CD8-positive, alpha-beta T cell (primary cell): ENCODE measurements at regions of chr1 and their contacts with region 1.

Region 1: GRCh38 chr1:212455803-212456528 is 23.2 kb downstream of the NENF start:
- DNase-seq: peak; percentile 68 to 92 (median 81)
- ATAC-seq: peak; percentile 80
- H3K4me3 ChIP-seq: no peak overlapping the region
- H3K4me3 Mint-ChIP-seq: no peak overlapping the region
- H3K27ac ChIP-seq: no peak overlapping the region
- H3K27ac Mint-ChIP-seq: no peak overlapping the region
- H3K4me1 ChIP-seq: no peaks in the 10 kb centered on the region
- H3K4me1 Mint-ChIP-seq: peaks cover 2% of the 10 kb centered on the region
- H3K27me3 ChIP-seq: no peaks in the 10 kb centered on the region
- H3K27me3 Mint-ChIP-seq: no peaks in the 10 kb centered on the region
- CTCF ChIP-seq: peak; percentile 94

Region 2: GRCh38 chr1:211698161-211699026 is 757.6 kb before region 1 on chr1:
- CTCF ChIA-PET with region 1: interaction called, 23 read pairs
- POLR2A ChIA-PET with region 1: no interaction called
- intact Hi-C with region 1: no loop called
- DNase-seq: peak; percentile 70 to 90 (median 82)
- ATAC-seq: peak; percentile 96
- H3K4me3 ChIP-seq: peak overlapping the region; percentile 18 to 34
- H3K4me3 Mint-ChIP-seq: peak overlapping the region; percentile 76
- H3K27ac ChIP-seq: no peak overlapping the region
- H3K27ac Mint-ChIP-seq: no peak overlapping the region
- H3K4me1 ChIP-seq: peaks cover 30% of the 10 kb centered on the region
- H3K4me1 Mint-ChIP-seq: peaks cover 42% of the 10 kb centered on the region
- H3K27me3 ChIP-seq: no peaks in the 10 kb centered on the region
- H3K27me3 Mint-ChIP-seq: no peaks in the 10 kb centered on the region
- CTCF ChIP-seq: peak; percentile 99

Region 3: GRCh38 chr1:211781260-211781659 is 674.7 kb before region 1 on chr1:
- CTCF ChIA-PET with region 1: no interaction called
- POLR2A ChIA-PET with region 1: no interaction called
- intact Hi-C with region 1: no loop called
- DNase-seq: no peak
- ATAC-seq: no peak
- H3K4me3 ChIP-seq: no peak overlapping the region
- H3K4me3 Mint-ChIP-seq: no peak overlapping the region
- H3K27ac ChIP-seq: no peak overlapping the region
- H3K27ac Mint-ChIP-seq: no peak overlapping the region
- H3K4me1 ChIP-seq: no peaks in the 10 kb centered on the region
- H3K4me1 Mint-ChIP-seq: peaks cover 7% of the 10 kb centered on the region
- H3K27me3 ChIP-seq: no peaks in the 10 kb centered on the region
- H3K27me3 Mint-ChIP-seq: no peaks in the 10 kb centered on the region
- CTCF ChIP-seq: no peak

Region 4: DNA sequence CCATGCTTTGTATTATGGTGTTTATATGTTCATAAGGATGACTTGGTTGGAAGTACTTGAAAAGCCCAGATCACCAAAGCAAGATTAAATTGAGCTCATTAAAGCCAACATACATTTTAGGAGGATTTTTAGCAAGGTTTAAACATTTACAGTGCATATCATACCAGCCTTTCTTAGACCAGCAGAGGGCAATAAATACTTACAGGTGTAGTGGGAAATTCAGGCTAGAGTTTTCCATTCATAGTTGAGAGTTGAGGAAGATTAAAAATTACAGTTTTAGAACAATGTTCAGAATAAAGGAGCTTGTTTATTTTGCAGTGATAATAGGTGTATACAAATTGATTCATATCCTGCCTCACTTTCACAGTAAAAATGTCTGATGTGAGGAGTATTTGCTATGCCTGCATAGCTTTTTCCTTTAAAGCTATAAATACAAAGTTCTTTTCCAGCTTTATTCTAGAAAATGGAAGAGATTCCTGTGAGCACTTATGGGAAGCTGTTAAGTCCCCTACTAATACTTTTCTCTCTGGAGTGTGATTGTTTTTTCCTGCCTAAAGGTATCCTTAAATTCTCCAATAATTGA is 385.2 kb before region 1 on chr1:
- CTCF ChIA-PET with region 1: interaction called, 299 read pairs
- POLR2A ChIA-PET with region 1: interaction called, 14 read pairs
- intact Hi-C with region 1: loop called (anchors 1 to 2 kb)
- DNase-seq: peak in 2 of 9 experiments; percentile 60 to 72
- ATAC-seq: peak; percentile 68
- H3K4me3 ChIP-seq: no peak overlapping the region
- H3K4me3 Mint-ChIP-seq: no peak overlapping the region
- H3K27ac ChIP-seq: no peak overlapping the region
- H3K27ac Mint-ChIP-seq: no peak overlapping the region
- H3K4me1 ChIP-seq: no peaks in the 10 kb centered on the region
- H3K4me1 Mint-ChIP-seq: no peaks in the 10 kb centered on the region
- H3K27me3 ChIP-seq: no peaks in the 10 kb centered on the region
- H3K27me3 Mint-ChIP-seq: no peaks in the 10 kb centered on the region
- CTCF ChIP-seq: peak; percentile 71

Region 5: GRCh38 chr1:212368073-212368484 is 87.9 kb before region 1 on chr1:
- CTCF ChIA-PET with region 1: interaction called, 40 read pairs
- POLR2A ChIA-PET with region 1: no interaction called
- intact Hi-C with region 1: loop called (anchors 1 to 5 kb)
- DNase-seq: peak; percentile 16 to 78 (median 53)
- ATAC-seq: peak; percentile 92
- H3K4me3 ChIP-seq: no peak overlapping the region
- H3K4me3 Mint-ChIP-seq: no peak overlapping the region
- H3K27ac ChIP-seq: no peak overlapping the region
- H3K27ac Mint-ChIP-seq: peak overlapping the region; percentile 20
- H3K4me1 ChIP-seq: no peaks in the 10 kb centered on the region
- H3K4me1 Mint-ChIP-seq: no peaks in the 10 kb centered on the region
- H3K27me3 ChIP-seq: no peaks in the 10 kb centered on the region
- H3K27me3 Mint-ChIP-seq: no peaks in the 10 kb centered on the region
- CTCF ChIP-seq: peak; percentile 79

Region 6: GRCh38 chr1:212440419-212440818 is 15.5 kb before region 1 on chr1:
- CTCF ChIA-PET with region 1: interaction called, 23 read pairs
- POLR2A ChIA-PET with region 1: no interaction called
- intact Hi-C with region 1: no loop called
- DNase-seq: no peak
- ATAC-seq: no peak
- H3K4me3 ChIP-seq: no peak overlapping the region
- H3K4me3 Mint-ChIP-seq: no peak overlapping the region
- H3K27ac ChIP-seq: no peak overlapping the region
- H3K27ac Mint-ChIP-seq: no peak overlapping the region
- H3K4me1 ChIP-seq: no peaks in the 10 kb centered on the region
- H3K4me1 Mint-ChIP-seq: peaks cover 11% of the 10 kb centered on the region
- H3K27me3 ChIP-seq: no peaks in the 10 kb centered on the region
- H3K27me3 Mint-ChIP-seq: no peaks in the 10 kb centered on the region
- CTCF ChIP-seq: no peak

Region 7: DNA sequence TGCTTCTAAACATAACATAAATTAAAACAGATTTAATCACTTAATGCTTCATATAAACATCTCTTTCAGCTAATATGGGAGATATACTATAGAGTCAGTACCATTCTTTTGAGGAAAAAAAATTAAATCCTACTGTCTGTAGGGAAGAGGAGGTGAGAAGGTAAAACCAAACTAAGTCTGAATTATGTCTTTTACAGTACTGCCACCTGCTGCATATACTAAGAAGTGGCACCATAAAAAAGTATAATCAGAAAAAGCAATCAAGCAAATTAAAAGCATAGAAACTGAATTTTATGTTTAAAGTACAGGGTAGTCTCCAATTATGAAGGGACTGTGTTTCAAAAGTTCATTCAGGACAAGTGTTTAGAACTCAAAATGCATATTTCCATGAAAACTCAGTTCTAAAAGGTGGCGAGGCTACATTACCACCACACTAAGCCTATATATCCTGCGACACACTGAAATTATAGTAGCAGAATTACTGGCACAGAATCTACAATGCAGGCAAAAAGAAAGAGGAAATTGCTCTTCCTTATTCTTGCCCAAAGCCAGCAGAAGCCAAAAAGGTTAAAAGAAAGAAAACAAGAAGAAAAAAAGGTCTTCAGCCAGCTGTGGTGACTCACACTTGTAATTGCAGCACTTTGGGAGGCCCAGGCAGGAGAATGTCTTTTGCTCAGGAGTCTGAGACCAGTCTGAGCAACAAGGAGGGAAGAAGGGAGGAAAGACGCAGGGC is 326.6 kb after region 1 on chr1:
- CTCF ChIA-PET with region 1: interaction called, 4 read pairs
- POLR2A ChIA-PET with region 1: no interaction called
- intact Hi-C with region 1: loop called (anchors 5 kb)
- DNase-seq: peak in 2 of 9 experiments; percentile 28 to 55
- ATAC-seq: peak; percentile 69
- H3K4me3 ChIP-seq: no peak overlapping the region
- H3K4me3 Mint-ChIP-seq: no peak overlapping the region
- H3K27ac ChIP-seq: no peak overlapping the region
- H3K27ac Mint-ChIP-seq: no peak overlapping the region
- H3K4me1 ChIP-seq: no peaks in the 10 kb centered on the region
- H3K4me1 Mint-ChIP-seq: peaks cover 7% of the 10 kb centered on the region
- H3K27me3 ChIP-seq: no peaks in the 10 kb centered on the region
- H3K27me3 Mint-ChIP-seq: no peaks in the 10 kb centered on the region
- CTCF ChIP-seq: peak; percentile 77